Endothelial cell of umbilical vein (primary cell): ENCODE measurements at regions of chr12 and their contacts with region 1.

Region 1: GRCh38 chr12:51994959-51995358 is 11.8 kb upstream of the TAMALIN start:
- DNase-seq: no peak
- H3K4me3 ChIP-seq: no peak overlapping the region
- H3K27ac ChIP-seq: no peak overlapping the region
- H3K4me1 ChIP-seq: no peaks in the 10 kb centered on the region
- H3K27me3 ChIP-seq: no peaks in the 10 kb centered on the region
- CTCF ChIP-seq: no peak
- POLR2A ChIP-seq: no peak

Region 2: GRCh38 chr12:52010152-52010622 is 15.2 kb after region 1 on chr12:
- CTCF ChIA-PET with region 1: interaction called, 946 read pairs
- POLR2A ChIA-PET with region 1: interaction called, 12 read pairs
- dilution Hi-C with region 1: no loop called
- intact Hi-C with region 1: no loop called
- DNase-seq: peak; percentile 97
- H3K4me3 ChIP-seq: peak overlapping the region in 2 of 3 experiments; percentile 72 to 95
- H3K27ac ChIP-seq: peak overlapping the region; percentile 78
- H3K4me1 ChIP-seq: peaks cover 37% of the 10 kb centered on the region
- H3K27me3 ChIP-seq: no peaks in the 10 kb centered on the region
- CTCF ChIP-seq: no peak
- POLR2A ChIP-seq: peak; percentile 84